ENCODE measurements at regions of chr10 and their contacts with region 1.

Region 1: DNA sequence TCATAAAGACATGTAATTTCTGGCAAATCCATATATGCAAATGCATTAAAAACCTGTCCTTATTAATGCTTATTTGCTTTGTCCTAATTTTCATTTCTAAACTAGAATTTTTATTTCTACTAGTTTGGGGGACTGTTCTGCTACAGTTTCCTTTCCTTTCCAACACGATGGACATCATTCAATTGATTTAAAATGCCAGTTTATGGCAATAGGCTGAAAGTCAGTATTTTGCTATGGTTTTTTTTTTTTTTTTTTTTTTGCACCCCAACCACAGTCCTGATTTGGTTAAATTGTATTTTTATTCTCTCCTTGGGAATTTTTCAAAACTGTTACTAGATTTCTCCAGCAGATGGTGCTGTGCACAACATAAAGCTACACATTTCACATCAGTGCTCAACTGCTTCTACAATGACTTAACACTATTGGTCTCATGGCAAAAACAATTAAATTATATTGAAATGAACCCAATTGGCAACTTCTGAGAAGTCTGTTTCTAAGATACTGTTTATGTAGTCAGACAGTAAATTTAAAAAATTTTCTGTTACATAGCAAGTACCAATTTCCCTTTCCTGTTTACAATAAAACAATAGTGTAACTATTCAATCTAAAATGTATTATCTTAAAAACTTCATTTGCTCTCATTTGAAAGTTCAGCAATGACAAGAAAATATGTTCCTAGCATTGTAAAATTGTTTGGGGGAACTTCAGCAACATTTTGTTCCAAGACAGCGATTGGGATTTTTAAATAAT is 193.8 kb upstream of the CCDC6 start:
- DNase-seq: peak; percentile 15 to 59
- H3K4me3 ChIP-seq: no peak overlapping the region
- H3K27ac ChIP-seq: no peak overlapping the region
- H3K4me1 ChIP-seq: no peaks in the 10 kb centered on the region; the same call in 1 of the 2 replicates
- H3K27me3 ChIP-seq: no peaks in the 10 kb centered on the region
- CTCF ChIP-seq: peak; percentile 86

Region 2: GRCh38 chr10:59865101-59865500 is 235.1 kb before region 1 on chr10:
- CTCF ChIA-PET with region 1: interaction called, 12 read pairs
- POLR2A ChIA-PET with region 1: no interaction called
- intact Hi-C with region 1: loop called (anchors 1 kb)
- DNase-seq: peak; percentile 79 to 94
- H3K4me3 ChIP-seq: no peak overlapping the region
- H3K27ac ChIP-seq: peak overlapping the region; percentile 46
- H3K4me1 ChIP-seq: peaks cover 24% of the 10 kb centered on the region
- H3K27me3 ChIP-seq: no peaks in the 10 kb centered on the region
- CTCF ChIP-seq: peak; percentile 57; the same call in 1 of the 2 replicates

Region 3: GRCh38 chr10:60200682-60201053 is 100.5 kb after region 1 on chr10:
- CTCF ChIA-PET with region 1: interaction called, 10 read pairs
- POLR2A ChIA-PET with region 1: no interaction called
- intact Hi-C with region 1: no loop called
- DNase-seq: no peak
- H3K4me3 ChIP-seq: no peak overlapping the region
- H3K27ac ChIP-seq: no peak overlapping the region
- H3K4me1 ChIP-seq: peaks cover 3% of the 10 kb centered on the region
- H3K27me3 ChIP-seq: no peaks in the 10 kb centered on the region
- CTCF ChIP-seq: no peak

Region 4: DNA sequence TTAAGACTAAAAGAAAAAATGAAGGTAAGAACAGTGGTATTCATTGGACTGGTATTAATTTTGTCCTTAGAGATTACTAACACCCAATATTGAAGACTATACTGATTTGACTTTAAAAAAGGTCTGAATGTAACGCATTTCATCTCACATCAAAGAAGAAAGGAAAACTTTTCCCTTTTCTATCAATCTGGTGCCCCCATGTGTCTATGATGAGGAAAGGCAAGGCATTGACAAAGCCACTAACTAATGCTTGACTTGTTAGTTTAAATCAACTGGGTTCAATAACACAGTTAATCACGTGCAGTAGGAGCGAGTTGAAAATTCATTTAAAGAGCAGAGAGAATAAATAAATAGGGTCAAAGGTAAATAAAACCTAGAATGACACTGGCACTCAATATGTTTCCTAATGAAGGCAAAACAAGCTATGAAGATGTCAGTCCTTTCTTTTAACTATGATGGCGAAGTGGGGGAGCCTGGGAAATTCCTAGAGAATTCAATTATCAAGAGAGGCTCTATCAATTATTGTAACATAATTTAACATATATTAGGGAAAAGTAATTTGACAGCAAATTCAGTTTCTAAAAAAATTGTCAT is 108.6 kb after region 1 on chr10:
- CTCF ChIA-PET with region 1: interaction called, 4 read pairs
- POLR2A ChIA-PET with region 1: no interaction called
- intact Hi-C with region 1: loop called (anchors 1 kb)
- DNase-seq: peak in 1 of 2 experiments; percentile 60
- H3K4me3 ChIP-seq: no peak overlapping the region
- H3K27ac ChIP-seq: no peak overlapping the region
- H3K4me1 ChIP-seq: peaks cover 8% of the 10 kb centered on the region
- H3K27me3 ChIP-seq: no peaks in the 10 kb centered on the region
- CTCF ChIP-seq: peak; percentile 89

Region 5: GRCh38 chr10:60549686-60550085 is 449.5 kb after region 1 on chr10:
- CTCF ChIA-PET with region 1: interaction called, 18 read pairs
- POLR2A ChIA-PET with region 1: no interaction called
- intact Hi-C with region 1: no loop called
- DNase-seq: no peak
- H3K4me3 ChIP-seq: no peak overlapping the region
- H3K27ac ChIP-seq: no peak overlapping the region
- H3K4me1 ChIP-seq: no peaks in the 10 kb centered on the region
- H3K27me3 ChIP-seq: no peaks in the 10 kb centered on the region
- CTCF ChIP-seq: peak; percentile 63

Measured in PC-9 (cell line).